Right cardiac atrium (tissue), 5 donors: ENCODE measurements at regions of chr1 and their contacts with region 1.

Region 1: GRCh38 chr1:224644553-224645154 is 28.5 kb downstream of the CNIH3 start:
- DNase-seq: no peak
- ATAC-seq: peak; percentile 41 to 62
- H3K4me3 ChIP-seq: no peak overlapping the region
- H3K27ac ChIP-seq: no peak overlapping the region
- H3K4me1 ChIP-seq: no peaks in the 10 kb centered on the region
- H3K27me3 ChIP-seq: no peaks in the 10 kb centered on the region

Region 2: DNA sequence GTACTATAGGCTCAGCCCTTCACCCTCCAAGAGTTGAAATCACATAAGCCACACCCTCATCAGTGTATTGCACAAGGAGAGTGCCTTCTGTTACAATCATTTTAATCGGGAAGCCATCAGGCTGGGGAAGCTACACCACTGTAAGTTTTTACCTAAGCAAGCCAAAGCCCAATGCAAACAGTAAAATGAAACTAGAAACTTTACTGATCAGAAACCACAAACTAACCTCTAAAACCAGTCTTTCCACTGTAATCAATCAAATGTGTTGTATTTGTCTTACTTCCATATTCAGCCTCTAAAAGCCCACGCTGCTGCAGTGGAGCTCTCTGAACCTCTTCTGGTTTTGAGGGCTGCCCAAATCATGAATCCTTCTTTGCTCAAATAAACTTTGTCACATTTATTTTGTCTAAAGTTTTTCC is 1005.3 kb before region 1 on chr1:
- intact Hi-C with region 1: no loop called
- DNase-seq: no peak
- ATAC-seq: no peak
- H3K4me3 ChIP-seq: no peak overlapping the region
- H3K27ac ChIP-seq: no peak overlapping the region
- H3K4me1 ChIP-seq: no peaks in the 10 kb centered on the region
- H3K27me3 ChIP-seq: no peaks in the 10 kb centered on the region

Region 3: DNA sequence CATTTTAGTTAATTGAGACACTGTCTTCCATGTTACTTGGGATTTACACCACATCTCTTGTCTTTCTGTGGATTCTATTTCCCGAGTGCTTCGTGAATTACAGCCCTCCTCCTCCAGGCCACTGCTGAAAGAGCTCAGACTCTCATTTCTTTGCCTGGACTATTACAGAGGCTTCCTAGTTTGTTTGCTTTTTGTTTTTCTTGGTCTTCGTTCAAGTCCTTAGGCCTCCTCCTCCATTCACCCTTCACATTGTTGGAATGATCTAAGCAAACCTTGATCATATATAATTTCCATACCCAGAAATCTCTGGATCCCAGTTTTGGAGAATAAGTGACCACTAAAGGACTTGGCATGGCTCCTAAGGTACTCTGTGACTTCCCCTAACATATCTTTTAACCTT is 65.5 kb after region 1 on chr1:
- intact Hi-C with region 1: loop called in 1 of 4 experiments (anchors 10 kb)
- DNase-seq: no peak
- ATAC-seq: no peak
- H3K4me3 ChIP-seq: no peak overlapping the region
- H3K27ac ChIP-seq: no peak overlapping the region
- H3K4me1 ChIP-seq: no peaks in the 10 kb centered on the region
- H3K27me3 ChIP-seq: no peaks in the 10 kb centered on the region

Region 4: GRCh38 chr1:224851210-224851847 is 206.7 kb after region 1 on chr1:
- intact Hi-C with region 1: loop called (anchors 2 to 10 kb)
- DNase-seq: peak; percentile 44 to 79 (median 72)
- ATAC-seq: peak; percentile 41 to 54
- H3K4me3 ChIP-seq: no peak overlapping the region
- H3K27ac ChIP-seq: no peak overlapping the region
- H3K4me1 ChIP-seq: no peaks in the 10 kb centered on the region
- H3K27me3 ChIP-seq: no peaks in the 10 kb centered on the region

Region 5: GRCh38 chr1:226092965-226093364 is 1448.3 kb after region 1 on chr1:
- intact Hi-C with region 1: no loop called
- DNase-seq: no peak
- ATAC-seq: no peak
- H3K4me3 ChIP-seq: no peak overlapping the region
- H3K27ac ChIP-seq: no peak overlapping the region
- H3K4me1 ChIP-seq: no peaks in the 10 kb centered on the region
- H3K27me3 ChIP-seq: no peaks in the 10 kb centered on the region